HEK293 (cell line): ENCODE measurements at regions of chr19 and their contacts with region 1.

Region 1: DNA sequence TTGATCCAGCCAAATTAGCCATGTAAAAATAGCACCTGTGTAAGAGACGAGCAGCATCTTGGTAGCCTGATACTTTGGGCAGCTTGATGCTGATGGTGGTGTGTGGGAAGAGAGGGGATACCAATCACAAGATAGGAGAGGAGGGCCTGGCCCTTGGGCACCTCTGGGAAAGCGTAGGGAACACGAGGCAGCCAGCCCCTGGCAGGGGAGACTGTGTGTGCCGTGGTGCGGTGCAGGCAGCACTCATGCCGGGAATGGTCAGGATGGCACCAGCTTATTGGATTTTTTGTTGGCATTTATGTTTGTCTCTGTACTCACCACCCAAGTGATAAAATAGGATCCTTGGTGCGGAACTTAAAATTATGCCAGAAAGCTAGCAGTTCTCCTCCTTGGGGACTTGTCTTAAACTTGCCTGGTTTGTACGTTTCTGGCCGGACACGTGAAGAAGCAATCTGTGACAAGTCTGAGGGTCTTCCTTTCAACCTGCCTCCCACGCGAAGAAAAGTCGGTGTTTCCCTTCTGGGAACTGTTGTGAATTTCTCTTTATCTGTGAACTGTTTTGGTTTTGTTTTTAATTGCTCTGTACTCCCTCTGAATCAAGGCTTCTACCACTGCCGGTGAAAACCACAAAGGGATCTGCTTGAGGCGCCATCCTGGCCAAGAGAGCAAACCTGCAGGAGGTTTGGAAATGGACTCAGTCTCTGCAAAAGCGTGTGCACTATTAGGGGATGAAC is 10.1 kb downstream of the SIGLEC8 start:
- H3K4me3 ChIP-seq: no peak overlapping the region
- H3K27ac ChIP-seq: no peak overlapping the region
- H3K4me1 ChIP-seq: no peaks in the 10 kb centered on the region
- CTCF ChIP-seq: no peak

Region 2: DNA sequence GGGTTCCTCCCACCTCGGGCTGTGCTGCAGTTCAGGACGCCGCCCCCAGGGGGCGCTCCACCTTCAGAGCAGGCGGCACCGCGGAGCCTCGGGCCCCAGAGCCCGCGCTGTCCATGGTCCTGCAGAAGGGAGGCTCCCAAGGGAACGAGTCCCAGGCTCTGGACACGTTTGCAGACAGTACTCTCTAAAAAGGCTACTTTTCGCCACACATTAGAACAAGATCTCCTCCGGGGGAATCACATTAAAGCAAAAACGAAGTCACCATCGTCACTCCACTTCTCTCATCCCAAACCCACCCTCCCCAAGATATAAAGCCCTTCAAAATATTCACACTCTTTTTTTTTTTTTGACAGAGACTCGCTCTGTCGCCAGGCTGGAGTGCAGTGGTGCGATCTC is 26.1 kb before region 1 on chr19:
- CTCF ChIA-PET with region 1: interaction called, 11 read pairs
- POLR2A ChIA-PET with region 1: no interaction called
- H3K4me3 ChIP-seq: no peak overlapping the region
- H3K27ac ChIP-seq: no peak overlapping the region
- H3K4me1 ChIP-seq: no peaks in the 10 kb centered on the region
- CTCF ChIP-seq: peak; percentile 86